Aorta (tissue), 5 donors: ENCODE measurements at regions of chr16 and their contacts with region 1.

Region 1: DNA sequence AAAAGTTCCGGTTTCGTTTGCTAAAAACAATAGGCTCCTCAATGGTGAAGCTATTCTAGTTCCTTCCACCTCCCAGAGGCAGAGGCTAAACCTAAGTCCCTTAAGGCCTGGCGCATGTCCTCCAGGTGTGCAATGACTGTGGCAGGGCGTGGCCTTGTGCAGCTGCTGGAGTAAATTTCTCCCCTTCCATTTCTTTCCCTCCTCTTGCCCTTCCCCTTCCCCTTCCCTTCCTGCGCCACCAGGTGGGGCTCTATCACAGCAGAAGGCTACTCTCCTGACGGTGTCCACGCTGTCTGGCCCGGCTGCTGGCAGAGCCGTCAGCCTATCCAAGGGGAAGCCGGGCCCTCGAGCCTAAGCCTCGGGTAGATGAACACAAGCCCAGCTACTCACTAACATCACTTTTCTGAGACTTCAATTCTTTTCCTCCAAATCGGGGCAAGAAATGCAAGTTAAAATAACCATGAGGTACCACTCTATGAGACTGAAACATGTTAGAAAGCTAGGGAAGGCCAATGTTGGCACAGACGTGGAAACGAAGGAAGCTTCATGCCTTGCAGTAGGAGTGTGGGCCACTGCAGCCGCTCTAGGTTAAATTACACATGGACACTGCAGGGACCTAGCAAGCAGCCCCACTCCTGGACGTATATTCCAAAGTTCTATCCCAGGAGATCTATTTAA is 34.4 kb downstream of the C16orf78 start:
- DNase-seq: peak; percentile 90 to 95
- ATAC-seq: peak; percentile 92
- H3K4me3 ChIP-seq: no peak overlapping the region
- H3K27ac ChIP-seq: no peak overlapping the region
- H3K4me1 ChIP-seq: no peaks in the 10 kb centered on the region
- H3K27me3 ChIP-seq: no peaks in the 10 kb centered on the region

Region 2: DNA sequence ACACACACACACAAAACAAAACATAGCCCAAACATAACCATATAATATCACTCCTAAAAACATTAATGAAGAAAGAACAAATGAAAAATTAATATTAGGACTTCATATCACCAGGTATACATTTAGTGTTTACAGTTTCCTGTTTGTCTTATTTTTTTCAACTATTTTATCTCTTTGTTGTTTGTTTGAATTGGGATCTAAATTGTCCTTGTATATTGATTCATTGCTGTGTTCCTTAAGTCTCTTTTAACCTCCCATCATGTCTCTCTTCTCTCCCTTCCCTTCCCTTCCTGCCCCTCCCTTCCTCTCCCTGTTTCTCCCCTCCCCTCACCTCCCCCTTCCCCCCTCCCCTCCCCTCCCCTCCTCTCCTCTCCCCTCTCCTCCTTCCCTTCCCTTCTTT is 102.6 kb before region 1 on chr16:
- intact Hi-C with region 1: no loop called
- DNase-seq: no peak
- ATAC-seq: no peak
- H3K4me3 ChIP-seq: no peak overlapping the region
- H3K27ac ChIP-seq: no peak overlapping the region
- H3K4me1 ChIP-seq: no peaks in the 10 kb centered on the region
- H3K27me3 ChIP-seq: peaks cover 0 to 2% of the 10 kb centered on the region in 2 donors

Region 3: GRCh38 chr16:49592546-49593423 is 184.8 kb after region 1 on chr16:
- intact Hi-C with region 1: loop called (anchors 2 to 5 kb)
- DNase-seq: no peak
- ATAC-seq: peak; percentile 45
- H3K4me3 ChIP-seq: no peak overlapping the region
- H3K27ac ChIP-seq: no peak overlapping the region
- H3K4me1 ChIP-seq: no peaks in the 10 kb centered on the region
- H3K27me3 ChIP-seq: no peaks in the 10 kb centered on the region

Region 4: DNA sequence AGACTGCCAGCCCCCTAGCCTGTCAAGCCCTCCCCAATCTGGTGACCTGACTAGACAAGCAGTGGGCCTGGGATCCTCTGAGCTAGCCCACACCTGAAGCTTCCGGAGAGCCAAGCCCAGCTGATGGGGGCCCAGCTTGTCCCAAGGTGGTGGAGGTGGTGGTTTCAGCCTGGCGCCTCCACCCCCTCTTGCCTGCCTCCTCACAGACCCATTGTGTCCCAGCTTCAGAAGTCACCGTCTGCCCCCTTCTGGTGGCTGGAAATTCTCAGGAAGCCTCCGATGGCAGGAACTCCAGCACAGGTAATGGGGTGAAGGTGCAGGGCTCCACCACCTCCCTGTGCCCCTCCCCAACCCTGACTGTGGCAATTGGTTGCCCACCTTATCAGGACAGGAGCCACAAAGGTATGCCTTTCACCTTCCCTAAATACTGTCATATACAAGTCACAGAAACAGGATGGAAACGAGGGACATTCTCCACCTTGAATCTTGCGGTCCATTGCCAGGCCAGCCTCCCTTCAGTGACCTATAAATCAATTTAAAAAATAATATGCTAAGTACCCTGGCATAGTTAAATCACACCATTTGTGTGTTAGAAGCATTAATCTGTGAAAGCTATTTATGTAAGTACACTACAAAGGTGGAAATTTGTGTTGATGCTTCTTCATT is 513.9 kb after region 1 on chr16:
- intact Hi-C with region 1: loop called (anchors 1 to 2 kb)
- DNase-seq: peak; percentile 69 to 80
- ATAC-seq: no peak
- H3K4me3 ChIP-seq: no peak overlapping the region
- H3K27ac ChIP-seq: no peak overlapping the region
- H3K4me1 ChIP-seq: no peaks in the 10 kb centered on the region
- H3K27me3 ChIP-seq: no peaks in the 10 kb centered on the region